PC-3 (cell line): ENCODE measurements at regions of chr18 and their contacts with region 1.

Region 1: GRCh38 chr18:24170389-24170788 is 31.5 kb downstream of the CABYR start:
- DNase-seq: no peak
- ATAC-seq: no peak
- H3K4me3 ChIP-seq: no peak overlapping the region
- H3K27ac ChIP-seq: no peak overlapping the region
- H3K4me1 ChIP-seq: peaks cover 13% of the 10 kb centered on the region
- H3K27me3 ChIP-seq: no peaks in the 10 kb centered on the region
- CTCF ChIP-seq: no peak

Region 2: DNA sequence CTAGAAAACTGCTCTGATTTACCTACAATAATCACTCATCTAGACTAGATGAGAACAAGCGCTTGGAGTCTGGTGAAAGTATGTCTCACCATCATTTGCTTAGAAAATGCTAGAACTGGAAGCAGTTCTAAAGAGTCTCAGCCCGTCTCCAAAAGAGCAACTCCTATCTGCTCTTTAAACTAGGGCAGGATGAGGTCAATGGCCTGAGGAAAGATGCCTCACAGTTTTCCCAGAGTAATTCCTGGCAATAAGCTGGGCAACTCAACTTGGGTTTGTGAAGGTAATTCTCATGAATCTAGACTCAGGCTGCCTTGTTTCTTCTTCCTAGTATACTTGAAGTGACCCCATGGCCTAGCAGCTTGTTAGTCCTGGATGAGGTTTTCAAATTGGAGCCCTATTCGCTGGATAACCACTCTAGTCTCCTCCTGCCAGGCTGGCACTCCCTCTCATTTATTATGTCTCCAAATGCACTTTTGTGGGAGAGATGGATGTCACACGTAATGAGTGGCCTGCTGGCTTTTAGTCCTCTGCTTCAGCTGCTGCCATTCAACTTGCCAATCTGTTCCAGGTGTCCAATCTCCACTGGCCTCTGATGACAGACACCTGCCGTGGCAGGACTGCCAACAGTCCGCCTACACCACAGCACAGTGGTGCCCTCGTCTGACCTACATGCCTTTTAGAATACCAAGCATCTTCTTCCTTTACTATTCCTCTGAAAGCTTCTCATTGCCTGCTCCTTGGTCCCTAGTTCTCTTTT is 49.4 kb after region 1 on chr18:
- CTCF ChIA-PET with region 1: no interaction called
- POLR2A ChIA-PET with region 1: no interaction called
- intact Hi-C with region 1: loop called (anchors 5 kb)
- DNase-seq: no peak
- ATAC-seq: no peak
- H3K4me3 ChIP-seq: no peak overlapping the region
- H3K27ac ChIP-seq: no peak overlapping the region
- H3K4me1 ChIP-seq: peaks cover 32% of the 10 kb centered on the region
- H3K27me3 ChIP-seq: no peaks in the 10 kb centered on the region
- CTCF ChIP-seq: no peak

Region 3: GRCh38 chr18:24231773-24232735 is 61.7 kb after region 1 on chr18:
- CTCF ChIA-PET with region 1: no interaction called
- POLR2A ChIA-PET with region 1: no interaction called
- intact Hi-C with region 1: loop called (anchors 5 kb)
- DNase-seq: peak; percentile 86
- ATAC-seq: peak; percentile 74
- H3K4me3 ChIP-seq: peak overlapping the region; percentile 6; the same call in 1 of the 2 replicates
- H3K27ac ChIP-seq: peak overlapping the region; percentile 84
- H3K4me1 ChIP-seq: peaks cover 53% of the 10 kb centered on the region
- H3K27me3 ChIP-seq: no peaks in the 10 kb centered on the region
- CTCF ChIP-seq: no peak